ENCODE measurements at regions of chr5 and their contacts with region 1.

Region 1: DNA sequence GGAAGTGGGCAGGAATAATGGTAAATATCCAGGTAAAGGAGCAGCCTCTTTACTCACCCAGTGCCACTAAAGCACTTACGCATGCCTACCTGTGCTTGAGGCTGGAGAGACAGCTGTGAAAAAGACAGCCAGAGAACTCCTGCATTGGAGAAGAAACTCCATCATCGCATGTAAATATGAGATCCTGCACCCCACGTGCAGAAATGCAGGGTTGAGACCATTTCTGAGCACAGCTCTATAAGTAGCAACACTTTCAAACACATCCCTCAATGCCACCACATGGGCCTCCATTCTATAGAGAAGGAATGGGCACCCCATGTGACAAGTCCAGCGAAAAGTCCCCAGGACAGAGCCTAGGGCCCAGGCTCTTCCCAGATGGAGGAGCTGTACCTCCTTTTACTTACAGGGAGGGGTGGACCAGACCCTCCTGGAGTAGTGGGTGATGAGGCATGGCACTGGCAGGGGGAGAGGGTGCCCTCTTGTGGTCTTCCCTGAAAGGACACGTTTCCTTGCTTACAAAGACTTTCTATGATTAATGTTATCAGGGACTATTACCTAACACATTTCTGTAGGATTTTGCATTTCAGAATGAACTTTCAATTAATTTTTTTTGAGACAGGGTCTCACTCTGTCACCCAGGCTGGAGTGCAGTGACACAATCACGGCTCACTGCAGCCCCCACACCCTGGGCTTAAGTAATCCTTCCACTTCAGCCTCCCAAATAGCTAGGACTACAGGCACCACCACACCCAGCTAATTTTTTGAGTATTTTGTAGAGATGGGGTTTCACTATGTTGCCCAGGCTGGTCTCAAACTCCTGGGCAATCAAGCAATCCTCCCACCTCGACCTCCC is 55.3 kb upstream of the IL17B start:
- DNase-seq: peak; percentile 31 to 52
- ATAC-seq: peak; percentile 50 to 64
- H3K4me3 ChIP-seq: no peak overlapping the region
- H3K27ac ChIP-seq: peak overlapping the region in 1 of 4 donors; percentile 27
- H3K4me1 ChIP-seq: peaks cover 0 to 10% of the 10 kb centered on the region in 2 donors
- H3K27me3 ChIP-seq: no peaks in the 10 kb centered on the region
- CTCF ChIP-seq: peak; percentile 63 to 90 (median 78)
- POLR2A ChIP-seq: no peak

Region 2: DNA sequence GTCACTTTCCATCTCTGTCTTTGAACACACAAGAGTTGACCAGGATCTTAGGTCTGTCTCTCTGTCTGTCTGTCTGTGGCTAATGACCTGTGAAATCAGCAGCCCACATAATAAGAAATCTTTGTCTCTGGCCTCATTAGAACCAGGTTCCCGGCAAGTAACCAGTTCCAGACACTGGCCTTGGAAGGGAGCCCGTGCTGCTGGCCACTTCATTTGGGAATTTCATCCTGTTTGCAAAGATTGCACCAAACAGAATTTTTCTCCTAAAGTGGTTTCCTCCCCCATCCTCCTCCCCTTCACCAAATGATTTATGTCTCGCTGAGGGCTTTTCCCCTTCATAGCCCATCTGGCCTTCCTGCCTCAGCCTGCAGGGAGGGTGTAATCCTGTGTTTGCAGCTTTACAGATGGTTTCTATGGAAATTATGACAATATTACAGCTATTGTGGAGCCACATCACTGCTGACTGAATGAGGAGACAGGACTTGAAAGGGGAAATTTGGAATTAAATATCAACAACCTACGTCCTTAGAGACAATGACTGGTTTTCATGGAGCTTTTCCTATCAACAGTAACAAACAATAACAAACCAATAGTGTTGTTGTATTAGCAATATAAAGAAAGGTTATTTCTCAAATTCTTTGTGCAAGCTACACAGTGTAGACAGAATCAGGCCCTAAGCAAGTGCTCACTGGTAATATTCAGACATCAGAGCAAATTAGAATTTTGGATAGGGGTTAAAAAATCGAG is 1950.3 kb before region 1 on chr5:
- in situ Hi-C with region 1: no loop called
- intact Hi-C with region 1: no loop called
- DNase-seq: peak; percentile 10 to 49
- ATAC-seq: peak; percentile 74 to 76
- H3K4me3 ChIP-seq: no peak overlapping the region
- H3K27ac ChIP-seq: peak overlapping the region; percentile 6 to 47 (median 40)
- H3K4me1 ChIP-seq: peaks cover 0 to 14% of the 10 kb centered on the region in 2 donors
- H3K27me3 ChIP-seq: no peaks in the 10 kb centered on the region
- CTCF ChIP-seq: no peak
- POLR2A ChIP-seq: no peak

Region 3: DNA sequence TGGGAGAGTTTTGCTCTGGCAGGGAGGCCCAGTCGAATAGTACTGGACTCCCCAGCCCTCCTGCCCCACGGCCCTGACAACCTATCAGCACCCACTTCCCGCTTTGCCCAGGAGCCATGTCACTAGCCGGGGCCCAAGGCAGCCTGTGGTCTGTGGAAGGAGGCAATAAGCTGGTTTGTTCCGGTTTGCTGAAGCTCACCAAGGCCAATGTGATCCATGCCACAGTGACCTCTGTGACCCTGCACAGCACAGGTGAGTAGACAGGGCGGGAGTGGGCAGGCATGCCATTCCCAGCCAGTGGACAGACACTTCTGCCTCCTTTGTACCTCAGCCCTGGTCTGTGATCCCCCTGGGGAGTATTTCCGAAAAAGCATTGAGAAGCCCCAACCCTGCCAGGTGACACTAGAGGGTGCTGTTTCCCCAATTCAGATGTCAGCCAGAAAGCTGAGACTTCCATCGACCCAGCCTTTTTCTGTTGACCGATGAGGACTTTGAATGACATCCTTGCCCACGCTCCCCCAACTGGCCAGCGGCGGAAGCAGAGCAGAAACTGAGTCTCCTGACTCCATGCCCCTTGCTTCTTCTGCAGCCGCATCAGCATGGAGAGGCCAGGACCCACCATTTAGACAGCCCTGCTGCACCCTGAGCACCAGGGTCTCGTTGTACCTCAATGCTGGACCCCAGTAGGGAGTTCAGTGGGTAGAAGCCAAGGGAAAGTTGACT is 67.0 kb before region 1 on chr5:
- in situ Hi-C with region 1: loop called in 2 of 4 experiments (anchors 5 to 10 kb)
- intact Hi-C with region 1: no loop called
- DNase-seq: no peak
- ATAC-seq: peak; percentile 41 to 49
- H3K4me3 ChIP-seq: no peak overlapping the region
- H3K27ac ChIP-seq: no peak overlapping the region
- H3K4me1 ChIP-seq: peaks cover 5 to 8% of the 10 kb centered on the region in 2 donors
- H3K27me3 ChIP-seq: no peaks in the 10 kb centered on the region
- CTCF ChIP-seq: peak in 4 of 5 experiments; percentile 25 to 75 (median 64)
- POLR2A ChIP-seq: no peak

Region 4: GRCh38 chr5:149381987-149382340 is 52.4 kb before region 1 on chr5:
- in situ Hi-C with region 1: loop called in 3 of 4 experiments (anchors 5 to 10 kb)
- intact Hi-C with region 1: loop called (anchors 1 kb)
- DNase-seq: peak; percentile 40 to 62
- ATAC-seq: peak; percentile 83 to 84
- H3K4me3 ChIP-seq: peak overlapping the region in 1 of 4 donors; percentile 22
- H3K27ac ChIP-seq: peak overlapping the region in 3 of 4 donors; percentile 64 to 76 (median 75)
- H3K4me1 ChIP-seq: peaks cover 21 to 24% of the 10 kb centered on the region in 2 donors
- H3K27me3 ChIP-seq: no peaks in the 10 kb centered on the region
- CTCF ChIP-seq: peak; percentile 82 to 98 (median 94)
- POLR2A ChIP-seq: no peak

Region 5: GRCh38 chr5:149387081-149387631 is 47.2 kb before region 1 on chr5:
- in situ Hi-C with region 1: loop called in 2 of 4 experiments (anchors 5 kb)
- intact Hi-C with region 1: loop called (anchors 1 kb)
- DNase-seq: no peak
- ATAC-seq: no peak
- H3K4me3 ChIP-seq: no peak overlapping the region
- H3K27ac ChIP-seq: peak overlapping the region; percentile 42 to 76 (median 70)
- H3K4me1 ChIP-seq: peaks cover 28 to 38% of the 10 kb centered on the region in 2 donors
- H3K27me3 ChIP-seq: no peaks in the 10 kb centered on the region
- CTCF ChIP-seq: no peak
- POLR2A ChIP-seq: no peak

Region 6: DNA sequence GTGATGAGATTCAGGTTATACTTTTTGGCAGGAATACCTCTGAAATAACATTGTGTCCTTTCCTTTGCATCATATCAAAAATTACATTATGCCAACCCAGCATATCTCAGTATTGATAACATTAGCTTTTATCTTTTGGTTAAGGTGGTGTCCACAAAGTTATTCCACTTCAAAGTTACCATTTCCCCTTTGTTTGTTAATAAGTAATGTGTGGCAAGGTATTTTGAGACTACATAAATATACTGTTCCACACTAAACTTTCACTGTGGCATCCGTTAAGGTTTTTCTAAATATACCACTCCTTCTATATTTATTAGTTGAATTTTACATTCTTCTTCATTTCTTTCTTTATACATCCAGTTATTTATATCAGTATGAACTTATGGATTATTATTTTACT is 132.8 kb after region 1 on chr5:
- in situ Hi-C with region 1: loop called in 1 of 4 experiments (anchors 5 kb)
- intact Hi-C with region 1: no loop called
- DNase-seq: no peak
- ATAC-seq: no peak
- H3K4me3 ChIP-seq: no peak overlapping the region
- H3K27ac ChIP-seq: no peak overlapping the region
- H3K4me1 ChIP-seq: peaks cover 10 to 16% of the 10 kb centered on the region in 2 donors
- H3K27me3 ChIP-seq: no peaks in the 10 kb centered on the region
- CTCF ChIP-seq: no peak
- POLR2A ChIP-seq: no peak

Measured in gastrocnemius medialis (tissue), 4 donors.